ENCODE measurements at regions of chr11 and their contacts with region 1.

Region 1: GRCh38 chr11:43311791-43312607 is at the start of gene API5:
- DNase-seq: peak; percentile 95
- H3K4me3 Mint-ChIP-seq: peak within 1 kb of the TSS; percentile 94
- H3K27ac Mint-ChIP-seq: peak within 1 kb of the TSS; percentile 98
- H3K4me1 Mint-ChIP-seq: peaks cover 46% of the 10 kb centered on the region
- H3K27me3 Mint-ChIP-seq: no peaks in the 10 kb centered on the region
- total RNA-seq, gene API5: 124 to 129 TPM

Region 2: DNA sequence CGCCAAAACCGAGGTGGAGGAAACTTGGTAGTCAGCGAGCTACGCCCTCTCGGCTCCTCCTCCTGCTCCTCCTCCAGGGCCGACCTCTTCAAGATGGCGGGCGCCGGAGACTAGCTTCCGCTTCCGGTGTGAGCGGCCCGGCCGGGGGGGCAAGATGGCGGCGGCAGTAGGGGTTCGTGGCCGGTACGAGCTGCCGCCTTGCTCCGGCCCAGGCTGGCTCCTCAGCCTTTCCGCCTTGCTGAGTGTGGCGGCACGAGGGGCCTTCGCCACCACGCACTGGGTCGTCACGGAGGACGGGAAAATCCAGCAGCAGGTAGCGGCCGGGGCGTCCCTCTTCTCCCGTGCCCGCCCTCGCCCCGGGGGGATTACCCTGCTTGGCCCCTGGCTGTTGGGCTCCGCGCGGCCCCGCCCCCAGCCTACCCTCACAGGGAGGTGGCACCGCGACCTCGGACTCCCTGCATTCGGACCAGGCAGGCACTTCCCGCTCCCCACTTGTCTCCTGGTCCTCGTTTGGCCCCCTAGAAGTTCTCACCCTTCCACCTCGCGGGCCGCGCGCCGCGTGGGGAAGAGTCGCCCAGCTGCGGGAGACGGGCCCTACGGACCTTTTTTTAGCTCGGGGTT is 46.9 kb after region 1 on chr11 and contains the start of gene TTC17:
- CTCF ChIA-PET with region 1: interaction called, 15 read pairs
- POLR2A ChIA-PET with region 1: interaction called, 5 read pairs
- DNase-seq: peak; percentile 95
- H3K4me3 Mint-ChIP-seq: peak within 1 kb of the TSS; percentile 96
- H3K27ac Mint-ChIP-seq: peak within 1 kb of the TSS; percentile 99
- H3K4me1 Mint-ChIP-seq: peaks cover 43% of the 10 kb centered on the region
- H3K27me3 Mint-ChIP-seq: no peaks in the 10 kb centered on the region
- total RNA-seq, gene TTC17: 72.5 to 75.1 TPM

Region 3: GRCh38 chr11:43419460-43419859 is 107.5 kb after region 1 on chr11:
- CTCF ChIA-PET with region 1: interaction called, 14 read pairs
- POLR2A ChIA-PET with region 1: interaction called, 3 read pairs
- DNase-seq: peak; percentile 68
- H3K4me3 Mint-ChIP-seq: no peak overlapping the region
- H3K27ac Mint-ChIP-seq: no peak overlapping the region
- H3K4me1 Mint-ChIP-seq: peaks cover 4% of the 10 kb centered on the region
- H3K27me3 Mint-ChIP-seq: no peaks in the 10 kb centered on the region

Measured in activated CD4-positive, alpha-beta T cell treated with anti-CD3 and anti-CD28 coated beads, Interleukin-2, amount 10 ng/mL, durations not matched to agents 7 days and 5 days (primary cell).